Mammary epithelial cell (primary cell): ENCODE measurements at regions of chr6 and their contacts with region 1.

Region 1: DNA sequence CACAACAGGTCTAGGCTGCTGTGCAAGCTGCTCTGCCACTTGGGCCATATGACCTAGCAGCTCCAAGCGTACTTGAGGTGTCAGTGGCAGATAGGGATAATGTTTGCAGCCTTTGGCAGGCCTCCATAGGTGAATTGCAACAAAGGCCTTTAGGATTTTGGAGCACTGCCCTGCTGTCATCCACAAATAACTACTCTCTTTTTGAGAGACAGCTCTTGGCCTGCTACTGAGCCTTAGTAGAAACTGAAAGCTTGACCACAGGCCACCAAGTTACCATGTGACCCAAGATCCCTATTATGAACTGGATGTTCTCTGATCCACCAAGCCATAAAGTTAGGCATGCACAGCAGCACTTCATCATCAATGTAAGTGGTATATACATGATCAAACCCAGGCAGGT is 29.9 kb downstream of the FBXO30 start:
- DNase-seq: no peak
- H3K4me3 ChIP-seq: no peak overlapping the region
- H3K27ac ChIP-seq: no peak overlapping the region
- H3K4me1 ChIP-seq: no peaks in the 10 kb centered on the region
- H3K27me3 ChIP-seq: no peaks in the 10 kb centered on the region
- CTCF ChIP-seq: no peak

Region 2: DNA sequence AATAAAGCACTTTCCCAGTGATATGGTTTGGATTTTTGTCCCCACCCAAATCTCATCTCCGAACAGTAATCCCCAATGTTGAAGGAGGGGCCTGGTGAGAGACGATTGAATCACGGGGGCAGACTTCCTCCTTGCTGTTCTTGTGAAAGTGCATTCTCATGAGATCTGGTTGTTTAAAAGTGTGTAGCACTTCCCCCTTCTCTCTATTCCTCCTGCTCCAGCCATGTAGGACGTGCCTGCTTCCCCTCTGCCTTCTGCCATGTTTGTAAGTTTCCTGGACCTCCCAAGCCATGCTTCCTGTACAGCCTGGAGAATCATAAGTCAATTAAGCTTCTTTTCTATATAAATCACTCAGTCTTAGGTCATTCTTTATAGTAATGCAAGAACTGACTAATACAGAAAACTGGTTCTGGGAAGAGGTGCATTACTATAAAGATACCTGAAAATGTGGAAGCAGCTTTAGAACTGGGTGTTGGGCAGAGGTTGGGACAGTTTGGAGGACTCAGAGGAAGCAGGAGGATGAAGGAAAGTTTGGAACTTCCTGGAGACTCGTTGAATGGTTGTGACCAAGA is 56.8 kb before region 1 on chr6:
- CTCF ChIA-PET with region 1: no interaction called
- dilution Hi-C with region 1: loop called (anchors 5 kb)
- in situ Hi-C with region 1: no loop called
- intact Hi-C with region 1: no loop called
- DNase-seq: no peak
- H3K4me3 ChIP-seq: no peak overlapping the region
- H3K27ac ChIP-seq: no peak overlapping the region
- H3K4me1 ChIP-seq: no peaks in the 10 kb centered on the region
- H3K27me3 ChIP-seq: no peaks in the 10 kb centered on the region
- CTCF ChIP-seq: no peak

Region 3: GRCh38 chr6:146183831-146184230 is 399.1 kb after region 1 on chr6:
- CTCF ChIA-PET with region 1: no interaction called
- dilution Hi-C with region 1: no loop called
- in situ Hi-C with region 1: no loop called
- intact Hi-C with region 1: no loop called
- DNase-seq: no peak
- H3K4me3 ChIP-seq: no peak overlapping the region
- H3K27ac ChIP-seq: no peak overlapping the region
- H3K4me1 ChIP-seq: no peaks in the 10 kb centered on the region
- H3K27me3 ChIP-seq: peaks cover 2% of the 10 kb centered on the region
- CTCF ChIP-seq: no peak